ENCODE measurements at regions of chr22 and their contacts with region 1.

Region 1: DNA sequence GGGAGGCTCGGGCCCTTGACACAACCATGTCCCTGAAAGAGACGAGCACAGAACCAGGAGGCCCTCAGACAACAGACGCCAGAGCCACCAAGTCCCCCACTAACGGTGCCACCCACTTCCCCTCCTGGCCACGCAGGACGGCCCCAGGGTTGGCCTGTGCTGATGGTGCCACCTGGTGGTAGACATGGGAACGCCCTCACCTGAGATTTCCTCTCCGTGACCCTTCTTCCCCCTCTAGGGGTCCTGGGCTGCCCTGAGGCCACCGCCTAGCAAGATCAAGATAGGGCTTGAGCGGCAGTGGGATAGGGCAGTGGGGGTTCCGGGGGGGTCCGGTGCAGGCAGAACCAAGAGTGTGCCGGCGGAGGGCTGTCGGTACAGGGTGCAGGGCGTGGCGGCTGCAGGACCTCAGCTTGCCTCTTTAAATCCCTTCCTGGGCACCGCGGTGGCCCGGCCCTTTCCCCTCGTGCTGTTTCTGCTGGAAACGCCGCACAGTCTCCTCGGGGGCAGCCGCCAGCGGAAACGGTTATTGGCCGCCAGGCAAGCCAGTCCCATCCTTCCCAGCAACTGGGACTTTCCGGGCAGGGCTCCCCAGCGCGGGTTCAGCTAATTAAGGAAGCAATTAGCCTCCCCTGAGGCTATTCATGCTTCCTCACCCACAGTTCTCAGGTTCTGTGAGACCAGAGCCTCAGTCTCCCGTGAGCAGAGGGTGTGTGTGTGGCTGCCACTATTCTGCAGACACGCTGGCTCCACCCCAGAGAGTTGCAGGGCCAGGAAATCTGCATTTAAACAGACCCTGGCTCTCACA is 5.5 kb upstream of the NFAM1 start:
- DNase-seq: peak; percentile 88
- ATAC-seq: peak; percentile 90
- H3K4me3 Mint-ChIP-seq: peak overlapping the region; percentile 66
- H3K27ac Mint-ChIP-seq: no peak overlapping the region
- H3K4me1 Mint-ChIP-seq: peaks cover 21% of the 10 kb centered on the region
- H3K27me3 Mint-ChIP-seq: peaks cover 2% of the 10 kb centered on the region

Region 2: GRCh38 chr22:41966607-41967240 is 471.0 kb before region 1 on chr22:
- CTCF ChIA-PET with region 1: interaction called, 4 read pairs
- POLR2A ChIA-PET with region 1: no interaction called
- intact Hi-C with region 1: loop called (anchors 1 kb)
- DNase-seq: peak; percentile 66
- ATAC-seq: peak; percentile 86
- H3K4me3 Mint-ChIP-seq: no peak overlapping the region
- H3K27ac Mint-ChIP-seq: peak overlapping the region; percentile 42
- H3K4me1 Mint-ChIP-seq: peaks cover 5% of the 10 kb centered on the region
- H3K27me3 Mint-ChIP-seq: no peaks in the 10 kb centered on the region

Region 3: DNA sequence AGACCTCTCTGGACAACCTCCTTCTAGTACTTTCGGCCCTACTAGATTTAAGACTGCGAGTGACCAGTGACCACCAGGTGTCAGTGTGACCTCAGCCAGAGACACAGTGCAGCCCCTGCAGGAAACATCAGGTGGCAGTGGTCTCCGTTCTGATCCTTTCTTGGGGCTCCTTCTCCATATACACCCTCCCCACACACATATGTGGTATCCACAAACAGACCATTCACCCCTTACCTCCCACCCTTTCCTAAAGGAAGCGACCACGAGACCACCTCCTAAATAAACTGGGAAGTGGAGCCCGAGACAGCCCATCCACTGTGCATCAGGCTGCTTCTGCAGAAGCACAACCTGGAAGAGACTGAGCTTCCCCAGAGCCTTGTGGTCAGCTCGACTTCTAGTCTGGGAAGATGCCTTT is 268.6 kb before region 1 on chr22:
- CTCF ChIA-PET with region 1: interaction called, 4 read pairs
- POLR2A ChIA-PET with region 1: no interaction called
- intact Hi-C with region 1: loop called (anchors 1 kb)
- DNase-seq: peak; percentile 84
- ATAC-seq: peak; percentile 92
- H3K4me3 Mint-ChIP-seq: no peak overlapping the region
- H3K27ac Mint-ChIP-seq: no peak overlapping the region
- H3K4me1 Mint-ChIP-seq: peaks cover 22% of the 10 kb centered on the region
- H3K27me3 Mint-ChIP-seq: no peaks in the 10 kb centered on the region

Region 4: DNA sequence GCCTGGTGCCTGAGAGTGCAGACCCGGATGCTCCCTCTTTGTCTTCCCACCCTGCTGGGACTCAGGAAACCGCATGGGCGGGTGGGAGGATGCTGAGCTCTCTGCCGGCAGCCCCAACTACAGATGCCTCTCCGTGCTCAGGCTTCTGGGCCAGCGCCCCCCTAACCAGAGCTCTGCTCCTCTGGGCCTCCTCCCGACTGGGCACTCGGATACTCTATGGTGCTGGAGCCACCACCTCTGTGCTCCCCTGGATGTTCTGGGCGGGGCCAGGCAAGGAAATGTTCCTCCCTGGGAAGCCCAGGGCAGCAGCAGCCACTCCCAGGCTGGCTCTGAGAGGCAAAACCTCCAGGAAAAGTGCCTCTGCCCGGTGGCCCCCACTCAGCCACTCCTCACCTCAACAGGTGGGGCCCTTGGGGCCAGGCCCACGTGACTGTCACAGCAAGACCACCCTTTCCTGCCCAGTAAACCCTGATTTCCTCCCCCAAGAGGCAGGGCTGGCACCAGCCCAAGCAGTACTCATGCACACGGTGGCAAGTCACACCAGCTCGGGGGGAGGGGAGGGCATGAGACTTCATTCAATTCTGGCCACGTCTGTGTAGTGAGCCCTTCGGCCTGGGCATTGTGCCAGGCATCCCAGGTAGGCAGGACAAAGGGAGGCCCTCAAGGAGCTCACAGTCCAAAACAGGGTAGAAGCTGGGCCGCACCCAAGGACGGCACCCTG is 112.5 kb before region 1 on chr22:
- CTCF ChIA-PET with region 1: no interaction called
- POLR2A ChIA-PET with region 1: no interaction called
- intact Hi-C with region 1: loop called in 1 of 2 experiments (anchors 5 kb)
- DNase-seq: peak; percentile 48
- ATAC-seq: peak; percentile 14
- H3K4me3 Mint-ChIP-seq: no peak overlapping the region
- H3K27ac Mint-ChIP-seq: peak overlapping the region; percentile 37
- H3K4me1 Mint-ChIP-seq: peaks cover 49% of the 10 kb centered on the region
- H3K27me3 Mint-ChIP-seq: no peaks in the 10 kb centered on the region

Region 5: DNA sequence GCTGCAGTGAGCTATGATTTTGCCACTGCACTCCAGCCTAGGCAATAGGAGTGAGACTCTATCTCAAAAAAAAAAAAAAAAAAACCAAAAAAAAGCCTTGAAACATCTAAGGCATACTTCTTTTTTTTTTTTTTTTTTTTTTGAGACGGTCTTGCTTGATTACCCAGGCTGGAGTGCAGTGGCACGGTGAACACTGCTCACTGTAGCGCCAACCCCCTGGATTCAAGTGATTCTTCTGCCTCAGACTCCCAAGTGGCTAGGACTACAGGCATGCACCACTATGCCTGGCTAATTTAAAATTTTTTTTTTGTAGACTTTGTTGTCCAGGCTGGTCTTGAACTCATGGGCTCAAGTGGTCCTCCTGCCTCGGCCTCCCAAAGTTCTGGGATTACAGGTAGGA is 399.9 kb after region 1 on chr22:
- CTCF ChIA-PET with region 1: no interaction called
- POLR2A ChIA-PET with region 1: no interaction called
- intact Hi-C with region 1: no loop called
- DNase-seq: no peak
- ATAC-seq: no peak
- H3K4me3 Mint-ChIP-seq: no peak overlapping the region
- H3K27ac Mint-ChIP-seq: no peak overlapping the region
- H3K4me1 Mint-ChIP-seq: peaks cover 3% of the 10 kb centered on the region
- H3K27me3 Mint-ChIP-seq: no peaks in the 10 kb centered on the region

Region 6: DNA sequence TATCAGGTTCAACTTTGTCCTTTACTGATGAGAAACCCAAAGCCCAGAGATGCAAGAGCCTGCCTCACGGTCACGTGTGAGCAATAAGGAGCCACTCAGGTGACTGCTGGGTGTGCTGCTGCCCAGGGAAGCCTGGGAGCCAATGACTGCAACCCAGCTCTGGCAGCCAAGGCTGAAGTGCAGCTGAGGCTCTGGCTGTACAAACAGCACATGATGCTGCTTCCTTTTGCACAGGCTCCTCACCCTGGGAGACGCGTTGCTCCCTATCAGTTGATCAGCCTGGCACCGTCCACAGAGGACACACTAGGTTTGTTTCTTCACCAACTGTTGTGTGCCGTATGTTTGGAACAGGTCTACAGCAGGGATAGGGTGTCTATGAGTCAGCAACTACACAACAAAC is 1205.7 kb after region 1 on chr22:
- CTCF ChIA-PET with region 1: no interaction called
- POLR2A ChIA-PET with region 1: no interaction called
- intact Hi-C with region 1: no loop called
- DNase-seq: no peak
- ATAC-seq: no peak
- H3K4me3 Mint-ChIP-seq: no peak overlapping the region
- H3K27ac Mint-ChIP-seq: no peak overlapping the region
- H3K4me1 Mint-ChIP-seq: no peaks in the 10 kb centered on the region
- H3K27me3 Mint-ChIP-seq: peaks cover 14% of the 10 kb centered on the region